ENCODE measurements at regions of chr2 and their contacts with region 1.

Region 1: GRCh38 chr2:189142893-189143759 is 36.4 kb downstream of the COL5A2 start:
- DNase-seq: peak; percentile 50
- ATAC-seq: peak; percentile 100
- H3K4me3 Mint-ChIP-seq: no peak overlapping the region
- H3K27ac Mint-ChIP-seq: no peak overlapping the region
- H3K4me1 Mint-ChIP-seq: peaks cover 7% of the 10 kb centered on the region
- H3K27me3 Mint-ChIP-seq: no peaks in the 10 kb centered on the region
- CTCF ChIP-seq: peak; percentile 66

Region 2: DNA sequence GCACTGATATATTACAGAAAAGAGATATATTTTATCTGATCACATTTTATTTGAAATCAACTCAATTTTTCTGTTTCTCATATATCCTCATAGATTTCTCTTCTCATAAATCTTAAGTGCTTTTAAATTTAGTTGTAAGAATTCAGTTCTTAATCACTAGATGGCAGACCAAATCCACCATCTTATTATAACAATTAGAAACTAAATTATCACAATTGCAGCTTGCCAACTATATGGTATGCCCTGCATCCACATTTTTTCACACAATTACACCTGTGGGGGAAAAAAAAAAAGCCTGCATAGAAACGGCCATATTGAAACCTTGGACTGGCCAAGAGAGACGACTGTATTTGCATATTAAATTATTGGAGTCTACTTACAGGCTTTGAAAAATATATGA is 28.0 kb before region 1 on chr2:
- CTCF ChIA-PET with region 1: interaction called, 12 read pairs
- POLR2A ChIA-PET with region 1: no interaction called
- DNase-seq: no peak
- ATAC-seq: no peak
- H3K4me3 Mint-ChIP-seq: no peak overlapping the region
- H3K27ac Mint-ChIP-seq: no peak overlapping the region
- H3K4me1 Mint-ChIP-seq: peaks cover 12% of the 10 kb centered on the region
- H3K27me3 Mint-ChIP-seq: no peaks in the 10 kb centered on the region
- CTCF ChIP-seq: no peak

Region 3: GRCh38 chr2:189153619-189154018 is 10.5 kb after region 1 on chr2:
- CTCF ChIA-PET with region 1: interaction called, 25 read pairs
- POLR2A ChIA-PET with region 1: no interaction called
- DNase-seq: no peak
- ATAC-seq: no peak
- H3K4me3 Mint-ChIP-seq: no peak overlapping the region
- H3K27ac Mint-ChIP-seq: no peak overlapping the region
- H3K4me1 Mint-ChIP-seq: peaks cover 4% of the 10 kb centered on the region
- H3K27me3 Mint-ChIP-seq: no peaks in the 10 kb centered on the region
- CTCF ChIP-seq: no peak

Region 4: GRCh38 chr2:189164746-189165145 is 21.6 kb after region 1 on chr2:
- CTCF ChIA-PET with region 1: interaction called, 15 read pairs
- POLR2A ChIA-PET with region 1: no interaction called
- DNase-seq: no peak
- ATAC-seq: peak; percentile 27; the same call in 1 of the 2 replicates
- H3K4me3 Mint-ChIP-seq: no peak overlapping the region
- H3K27ac Mint-ChIP-seq: no peak overlapping the region
- H3K4me1 Mint-ChIP-seq: peaks cover 46% of the 10 kb centered on the region
- H3K27me3 Mint-ChIP-seq: no peaks in the 10 kb centered on the region
- CTCF ChIP-seq: no peak

Region 5: GRCh38 chr2:189287982-189288521 is 144.9 kb after region 1 on chr2:
- CTCF ChIA-PET with region 1: interaction called, 23 read pairs
- POLR2A ChIA-PET with region 1: no interaction called
- DNase-seq: no peak
- ATAC-seq: peak; percentile 82
- H3K4me3 Mint-ChIP-seq: no peak overlapping the region
- H3K27ac Mint-ChIP-seq: no peak overlapping the region
- H3K4me1 Mint-ChIP-seq: peaks cover 14% of the 10 kb centered on the region
- H3K27me3 Mint-ChIP-seq: no peaks in the 10 kb centered on the region
- CTCF ChIP-seq: no peak